ENCODE measurements at regions of chr19 and their contacts with region 1.

Region 1: DNA sequence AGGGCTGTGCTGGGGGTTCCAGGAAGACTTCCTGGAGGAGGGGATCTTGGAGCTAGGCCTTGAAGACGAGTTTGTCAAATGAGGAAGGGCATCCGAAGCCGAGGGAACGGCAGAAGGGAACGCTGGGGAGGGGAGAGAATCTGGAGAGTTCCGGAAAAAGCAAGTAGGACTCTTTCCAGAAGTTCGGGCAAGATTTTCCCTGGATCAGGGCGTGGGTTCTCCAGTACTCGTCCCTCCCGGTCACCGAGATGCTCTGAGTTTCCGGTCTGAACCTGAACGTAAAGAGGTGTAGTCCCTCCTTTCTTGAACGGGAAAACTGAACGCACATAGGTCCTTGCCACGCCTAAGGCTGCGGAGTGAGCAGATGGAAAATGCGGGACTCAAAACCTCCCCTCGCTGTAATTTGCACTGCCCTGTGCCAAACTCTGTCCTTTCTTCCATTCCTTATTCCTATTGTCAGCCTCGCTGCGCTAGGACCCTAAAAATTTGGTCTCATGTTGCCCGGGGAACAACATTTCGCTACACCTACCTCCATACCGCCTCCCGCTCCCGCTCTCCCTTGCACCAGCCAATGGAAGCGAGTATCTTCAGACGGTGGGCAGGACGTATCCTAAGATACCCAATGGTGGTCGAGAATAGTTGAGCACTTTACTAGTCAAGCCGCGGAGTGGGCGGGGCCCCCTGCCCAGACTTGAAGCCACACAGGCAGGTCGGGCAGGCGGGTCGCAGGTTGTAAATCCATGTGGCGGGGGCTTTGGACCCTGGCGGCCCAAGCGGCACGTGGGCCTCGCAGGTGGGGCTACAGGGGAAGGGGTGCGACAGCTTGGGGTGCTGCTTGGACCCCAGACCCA is at the start of gene GTPBP3:
- DNase-seq: peak; percentile 95 to 100 (median 98)
- H3K4me3 ChIP-seq: peak within 1 kb of the TSS; percentile 52 to 100 (median 85)
- H3K27ac ChIP-seq: peak within 1 kb of the TSS; percentile 67 to 98 (median 94)
- H3K27me3 ChIP-seq: no peaks in the 10 kb centered on the region
- CTCF ChIP-seq: peak in 30 of 56 donors; percentile 9 to 52 (median 24)
- total RNA-seq, gene GTPBP3: 11.7 to 35.1 (median 22.4) TPM

Region 2: GRCh38 chr19:17305517-17306284 is 31.4 kb before region 1 on chr19 and contains the start of gene MRPL34:
- intact Hi-C with region 1: loop called (anchors 1 to 2 kb)
- DNase-seq: peak in 9 of 10 donors; percentile 92 to 98 (median 97)
- H3K4me3 ChIP-seq: peak within 1 kb of the TSS; percentile 53 to 100 (median 82)
- H3K27ac ChIP-seq: peak within 1 kb of the TSS; percentile 75 to 99 (median 95)
- H3K27me3 ChIP-seq: no peaks in the 10 kb centered on the region
- CTCF ChIP-seq: peak; percentile 37 to 90 (median 78)
- total RNA-seq, gene MRPL34: 41.6 to 99.8 (median 67.2) TPM

Region 3: DNA sequence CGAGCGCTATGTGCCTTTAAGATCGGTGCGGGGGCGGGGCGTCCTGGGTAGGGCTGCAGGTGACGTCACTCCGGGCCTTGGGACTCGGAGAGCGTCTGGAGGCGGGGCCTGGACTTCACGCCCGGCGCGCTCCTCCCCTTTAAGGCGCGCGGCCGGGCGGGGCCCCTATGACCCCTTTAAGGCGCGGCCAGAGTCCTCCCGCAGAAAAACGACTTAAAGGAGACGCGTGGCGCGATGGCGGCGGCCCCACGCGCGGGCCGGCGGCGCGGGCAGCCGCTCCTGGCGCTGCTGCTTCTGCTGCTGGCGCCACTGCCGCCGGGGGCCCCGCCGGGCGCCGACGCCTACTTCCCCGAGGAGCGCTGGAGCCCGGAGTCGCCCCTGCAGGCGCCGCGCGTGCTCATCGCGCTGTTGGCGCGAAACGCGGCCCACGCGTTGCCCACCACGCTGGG is 218.4 kb after region 1 on chr19 and contains the start of gene COLGALT1:
- intact Hi-C with region 1: loop called in 1 of 2 experiments (anchors 10 kb)
- DNase-seq: peak; percentile 98 to 100 (median 99)
- H3K4me3 ChIP-seq: peak within 1 kb of the TSS; percentile 72 to 98 (median 92)
- H3K27ac ChIP-seq: peak within 1 kb of the TSS in 58 of 59 donors; percentile 4 to 91 (median 76)
- H3K27me3 ChIP-seq: no peaks in the 10 kb centered on the region
- CTCF ChIP-seq: peak in 8 of 56 donors; percentile 3 to 28 (median 16)
- total RNA-seq, gene COLGALT1: 20.9 to 73.4 (median 38.7) TPM

Region 4: GRCh38 chr19:17565611-17566010 is 228.5 kb after region 1 on chr19:
- intact Hi-C with region 1: no loop called
- DNase-seq: no peak
- H3K4me3 ChIP-seq: no peak overlapping the region
- H3K27ac ChIP-seq: no peak overlapping the region
- H3K27me3 ChIP-seq: no peaks in the 10 kb centered on the region
- CTCF ChIP-seq: no peak